Stomach (tissue), 19 donors: ENCODE measurements at regions of chr17 and their contacts with region 1.

Region 1: DNA sequence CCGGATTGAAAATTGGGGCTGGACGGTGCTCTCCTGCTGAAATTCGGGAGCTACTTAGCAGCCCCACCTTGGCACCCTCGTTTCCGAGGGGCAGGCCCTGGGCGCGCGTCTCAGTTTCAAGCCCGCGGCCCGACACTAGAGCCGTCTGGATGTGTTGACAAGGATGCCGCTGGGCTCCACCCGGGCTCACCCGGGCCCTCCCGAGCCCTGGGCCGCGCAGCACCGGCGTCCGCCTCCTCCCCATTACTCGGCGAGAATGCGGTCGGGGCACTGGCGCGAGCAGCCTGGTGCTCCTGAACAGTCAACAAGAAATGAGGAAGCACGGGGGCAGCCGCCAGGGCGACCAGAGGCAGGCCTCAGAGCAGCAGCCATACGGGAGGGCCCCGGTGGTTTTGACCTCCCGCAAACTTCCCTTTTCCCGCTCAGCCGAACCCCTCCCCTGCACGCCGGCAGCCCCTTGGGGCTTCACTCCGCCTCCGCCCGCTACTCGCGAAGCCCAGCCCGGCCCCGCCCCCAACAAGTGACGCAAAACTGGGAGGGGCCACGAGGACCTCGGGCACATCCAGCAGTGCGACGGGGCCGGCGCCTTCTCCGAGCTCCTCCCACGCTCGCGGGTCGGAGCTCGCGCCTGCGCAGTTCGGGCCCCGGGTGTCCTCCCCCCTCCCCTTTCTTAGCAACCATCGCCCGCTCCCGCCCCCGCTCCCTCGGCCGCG is 447 bp upstream of the SEC14L1 start:
- DNase-seq: peak; percentile 100
- H3K4me3 ChIP-seq: peak overlapping the region; percentile 67 to 99 (median 92)
- H3K27ac ChIP-seq: peak overlapping the region; percentile 95 to 99 (median 96)
- H3K4me1 ChIP-seq: peaks cover 18 to 60% (median 44%) of the 10 kb centered on the region in 4 donors
- H3K27me3 ChIP-seq: no peaks in the 10 kb centered on the region
- CTCF ChIP-seq: peak in 1 of 7 experiments; percentile 7
- EP300 ChIP-seq: no peak
- POLR2A ChIP-seq: peak in 2 of 4 donors; percentile 86 to 93

Region 2: DNA sequence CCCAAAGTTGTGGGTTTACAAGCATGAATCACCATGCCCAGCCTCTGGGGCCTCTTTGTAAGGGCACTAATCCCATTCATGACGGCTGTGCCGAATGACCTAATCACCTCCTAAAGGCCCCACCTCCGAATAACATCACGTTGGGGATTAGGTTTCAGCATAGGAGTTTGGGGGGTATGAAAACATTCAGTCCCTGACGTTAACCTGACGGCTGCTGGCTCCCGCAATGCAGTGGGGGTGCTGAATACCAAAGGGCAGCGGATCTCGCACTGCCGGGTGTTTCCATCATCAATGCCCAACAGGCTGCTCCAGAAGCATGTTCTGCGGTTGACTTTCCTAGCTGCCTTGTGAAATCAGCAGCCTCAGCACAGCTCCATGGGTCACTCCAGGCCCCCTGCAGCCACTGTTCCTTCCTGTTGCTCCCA is 120.4 kb before region 1 on chr17:
- intact Hi-C with region 1: no loop called
- DNase-seq: no peak
- H3K4me3 ChIP-seq: no peak overlapping the region
- H3K27ac ChIP-seq: no peak overlapping the region
- H3K4me1 ChIP-seq: no peaks in the 10 kb centered on the region
- H3K27me3 ChIP-seq: peaks cover 0 to 23% (median 0%) of the 10 kb centered on the region in 3 donors
- CTCF ChIP-seq: no peak
- EP300 ChIP-seq: no peak
- POLR2A ChIP-seq: no peak

Region 3: GRCh38 chr17:77214743-77215142 is 74.4 kb after region 1 on chr17:
- intact Hi-C with region 1: loop called (anchors 10 kb)
- DNase-seq: peak; percentile 51 to 72
- H3K4me3 ChIP-seq: no peak overlapping the region
- H3K27ac ChIP-seq: peak overlapping the region in 1 of 5 donors; percentile 12
- H3K4me1 ChIP-seq: peaks cover 6 to 24% (median 11%) of the 10 kb centered on the region in 4 donors
- H3K27me3 ChIP-seq: no peaks in the 10 kb centered on the region
- CTCF ChIP-seq: peak in 5 of 7 experiments; percentile 27 to 59 (median 49)
- EP300 ChIP-seq: no peak
- POLR2A ChIP-seq: no peak